Activated naive CD4-positive, alpha-beta T cell treated with anti-CD3 and anti-CD28 coated beads for 36 hours (primary cell): ENCODE measurements at regions of chr5 and their contacts with region 1.

Region 1: DNA sequence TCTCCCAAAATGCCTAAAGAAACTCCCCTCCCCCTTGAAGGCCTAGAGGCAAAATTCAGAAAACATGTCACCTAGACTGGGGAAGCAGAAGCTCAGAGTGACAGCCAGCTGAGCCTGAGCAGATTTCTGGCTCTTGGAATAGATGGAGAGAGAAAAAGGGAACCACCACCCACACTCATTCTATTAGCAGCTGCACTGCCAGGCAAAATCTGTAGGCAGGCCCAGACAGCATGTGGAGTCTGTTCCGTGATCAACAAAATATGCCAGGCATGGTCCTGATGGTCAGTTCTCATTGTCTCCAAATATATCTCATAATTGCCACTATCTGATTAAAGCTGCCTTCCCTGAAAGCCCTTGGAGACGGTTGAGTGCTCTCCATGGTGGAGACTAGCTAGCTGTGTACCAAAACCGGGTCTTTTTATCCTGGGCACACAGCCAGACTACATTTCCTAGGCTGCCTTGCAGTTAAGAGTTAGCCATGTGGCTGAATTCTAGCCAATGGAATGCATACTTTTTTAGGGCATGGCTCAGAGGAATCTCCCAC is 131.7 kb upstream of the GPR151 start:
- DNase-seq: no peak
- H3K4me3 Mint-ChIP-seq: no peak overlapping the region
- H3K27ac Mint-ChIP-seq: no peak overlapping the region
- H3K4me1 Mint-ChIP-seq: no peaks in the 10 kb centered on the region
- H3K27me3 Mint-ChIP-seq: no peaks in the 10 kb centered on the region

Region 2: GRCh38 chr5:146541958-146542849 is 105.5 kb before region 1 on chr5:
- CTCF ChIA-PET with region 1: no interaction called
- intact Hi-C with region 1: loop called (anchors 5 kb)
- DNase-seq: peak; percentile 81
- H3K4me3 Mint-ChIP-seq: no peak overlapping the region
- H3K27ac Mint-ChIP-seq: no peak overlapping the region
- H3K4me1 Mint-ChIP-seq: no peaks in the 10 kb centered on the region
- H3K27me3 Mint-ChIP-seq: no peaks in the 10 kb centered on the region